ENCODE measurements at regions of chr7 and their contacts with region 1.

Region 1: DNA sequence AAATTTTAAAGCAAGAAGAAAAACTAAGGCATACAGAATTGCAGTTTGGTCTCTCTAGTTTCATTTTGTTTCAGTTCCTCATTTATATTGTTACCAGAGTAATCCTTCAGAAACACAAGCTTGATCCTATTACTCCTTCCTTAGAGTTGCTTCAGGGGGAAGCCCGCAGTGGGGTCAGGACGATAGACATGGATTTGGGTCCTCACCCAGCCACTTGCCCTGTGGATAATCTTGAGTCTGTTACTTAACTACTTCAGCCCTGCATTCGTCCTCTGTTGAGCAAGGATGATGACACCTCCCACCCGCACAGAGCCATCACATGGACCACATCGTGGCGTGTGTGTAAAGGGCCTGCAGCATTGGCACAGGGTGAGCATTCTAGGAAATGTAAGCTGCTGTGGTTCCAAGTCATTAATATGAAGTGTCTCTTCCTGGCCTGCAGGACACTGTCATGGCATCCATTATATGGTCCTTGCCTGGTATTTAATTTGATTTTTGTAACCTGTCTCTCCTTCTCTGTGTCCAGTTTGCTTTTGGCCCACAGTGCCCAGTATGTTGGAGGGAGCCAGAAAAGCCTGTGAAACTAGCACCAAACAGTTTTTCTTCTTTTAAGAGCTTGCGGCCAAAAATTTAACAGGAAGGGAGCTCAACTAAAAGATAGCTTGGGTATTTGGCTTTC is 111.2 kb downstream of the EEPD1 start:
- DNase-seq: no peak
- H3K4me3 Mint-ChIP-seq: no peak overlapping the region
- H3K27ac Mint-ChIP-seq: no peak overlapping the region
- H3K4me1 Mint-ChIP-seq: peaks cover 20% of the 10 kb centered on the region
- H3K27me3 Mint-ChIP-seq: no peaks in the 10 kb centered on the region

Region 2: DNA sequence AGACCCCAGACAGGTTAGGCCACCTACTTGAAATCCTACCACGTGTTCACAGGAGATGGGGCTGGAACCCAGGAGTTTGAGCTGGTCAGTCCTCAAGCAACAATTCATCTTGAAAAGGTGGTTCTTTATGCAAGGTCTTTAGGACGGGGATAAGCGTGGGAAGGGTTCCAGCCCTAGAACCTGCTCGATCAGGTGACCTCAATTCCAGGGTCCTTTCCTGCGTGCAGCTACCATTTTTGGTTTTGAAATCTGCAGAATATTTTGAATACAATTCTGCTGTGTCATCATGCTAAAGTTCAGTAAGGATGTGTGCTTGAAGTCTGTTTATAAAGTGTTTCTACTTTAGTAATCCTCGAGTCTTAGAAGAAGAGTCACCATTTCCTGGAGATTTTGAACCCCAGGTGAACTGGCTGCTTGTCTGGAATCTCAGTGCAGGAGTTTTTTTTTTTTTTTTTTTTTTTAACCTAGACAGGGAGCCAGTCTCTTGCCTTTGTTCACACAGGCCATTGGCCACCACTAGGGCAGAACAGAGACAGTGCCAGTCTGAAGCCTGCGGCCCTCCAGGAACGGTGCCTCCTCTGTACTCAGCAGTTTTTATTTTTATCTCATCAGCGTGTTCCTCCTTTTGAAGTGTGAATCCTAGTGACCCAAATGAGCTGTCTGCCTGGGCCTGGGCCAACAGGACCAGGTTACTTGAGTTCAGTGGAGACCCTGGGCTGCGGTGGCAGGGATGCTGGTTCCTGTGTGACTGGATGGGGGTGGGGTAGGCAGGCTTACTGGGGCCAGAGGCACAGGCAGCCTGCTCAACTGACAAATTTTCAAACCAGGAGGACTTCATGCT is 56.6 kb before region 1 on chr7:
- CTCF ChIA-PET with region 1: no interaction called
- intact Hi-C with region 1: loop called (anchors 5 kb)
- DNase-seq: peak; percentile 32
- H3K4me3 Mint-ChIP-seq: no peak overlapping the region
- H3K27ac Mint-ChIP-seq: no peak overlapping the region
- H3K4me1 Mint-ChIP-seq: peaks cover 30% of the 10 kb centered on the region
- H3K27me3 Mint-ChIP-seq: no peaks in the 10 kb centered on the region